Activated CD8-positive, alpha-beta memory T cell treated with anti-CD3 and anti-CD28 coated beads, Interleukin-2, amount 10 ng/mL, durations not matched to agents 7 days and 5 days (primary cell): ENCODE measurements at regions of chr20 and their contacts with region 1.

Region 1: GRCh38 chr20:51385646-51386530 is 156.6 kb downstream of the NFATC2 start:
- DNase-seq: peak; percentile 61
- ATAC-seq: peak; percentile 46
- H3K4me3 Mint-ChIP-seq: peak overlapping the region; percentile 36
- H3K27ac Mint-ChIP-seq: peak overlapping the region; percentile 86
- H3K4me1 Mint-ChIP-seq: peaks cover 76% of the 10 kb centered on the region
- H3K27me3 Mint-ChIP-seq: no peaks in the 10 kb centered on the region

Region 2: DNA sequence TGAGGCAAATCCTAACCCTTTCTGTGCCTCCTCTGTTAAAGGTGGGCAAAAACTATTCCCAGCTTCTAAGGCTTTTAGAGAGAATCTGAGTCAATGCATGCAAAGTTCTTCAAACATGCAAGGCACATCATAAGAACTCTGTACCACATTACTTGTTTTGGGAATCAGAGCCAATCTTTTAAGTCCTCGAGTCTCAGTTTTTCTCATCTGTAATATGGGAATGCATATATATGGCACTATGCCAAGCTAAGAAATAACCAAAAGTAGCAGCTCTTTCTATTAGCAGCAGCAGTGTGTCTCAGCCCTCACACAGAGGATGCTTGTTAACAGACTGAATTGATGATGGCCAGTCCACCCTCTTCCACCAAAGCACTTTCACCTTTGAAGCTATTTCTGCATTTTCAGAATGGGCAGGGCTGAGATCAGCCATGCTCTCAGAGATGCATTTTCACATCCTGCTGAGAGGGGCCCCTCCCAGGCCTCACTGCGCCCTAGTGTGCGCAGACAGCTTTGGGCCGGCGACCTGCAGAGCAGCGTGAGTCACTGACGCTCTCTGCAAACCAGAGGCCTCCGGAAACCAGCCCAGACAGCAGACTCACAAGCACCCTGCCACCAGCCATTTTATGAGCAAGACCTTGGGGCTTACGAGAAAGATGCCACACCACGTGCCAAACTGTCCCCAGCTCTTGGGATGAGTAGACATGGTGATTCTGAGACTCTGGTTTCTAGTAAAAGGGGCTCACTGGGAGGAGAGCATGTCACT is 18.6 kb after region 1 on chr20:
- CTCF ChIA-PET with region 1: interaction called, 71 read pairs
- DNase-seq: peak; percentile 98
- ATAC-seq: peak; percentile 85
- H3K4me3 Mint-ChIP-seq: no peak overlapping the region
- H3K27ac Mint-ChIP-seq: peak overlapping the region; percentile 99
- H3K4me1 Mint-ChIP-seq: peaks cover 95% of the 10 kb centered on the region
- H3K27me3 Mint-ChIP-seq: no peaks in the 10 kb centered on the region

Region 3: GRCh38 chr20:51417250-51418136 is 31.6 kb after region 1 on chr20:
- CTCF ChIA-PET with region 1: interaction called, 22 read pairs
- DNase-seq: no peak
- ATAC-seq: no peak
- H3K4me3 Mint-ChIP-seq: peak overlapping the region; percentile 11
- H3K27ac Mint-ChIP-seq: peak overlapping the region; percentile 88
- H3K4me1 Mint-ChIP-seq: peaks cover 86% of the 10 kb centered on the region
- H3K27me3 Mint-ChIP-seq: no peaks in the 10 kb centered on the region

Region 4: GRCh38 chr20:51494241-51495120 is 108.6 kb after region 1 on chr20:
- CTCF ChIA-PET with region 1: interaction called, 13 read pairs
- DNase-seq: peak; percentile 61
- ATAC-seq: peak; percentile 40
- H3K4me3 Mint-ChIP-seq: peak overlapping the region; percentile 45
- H3K27ac Mint-ChIP-seq: peak overlapping the region; percentile 68
- H3K4me1 Mint-ChIP-seq: peaks cover 92% of the 10 kb centered on the region
- H3K27me3 Mint-ChIP-seq: no peaks in the 10 kb centered on the region

Region 5: DNA sequence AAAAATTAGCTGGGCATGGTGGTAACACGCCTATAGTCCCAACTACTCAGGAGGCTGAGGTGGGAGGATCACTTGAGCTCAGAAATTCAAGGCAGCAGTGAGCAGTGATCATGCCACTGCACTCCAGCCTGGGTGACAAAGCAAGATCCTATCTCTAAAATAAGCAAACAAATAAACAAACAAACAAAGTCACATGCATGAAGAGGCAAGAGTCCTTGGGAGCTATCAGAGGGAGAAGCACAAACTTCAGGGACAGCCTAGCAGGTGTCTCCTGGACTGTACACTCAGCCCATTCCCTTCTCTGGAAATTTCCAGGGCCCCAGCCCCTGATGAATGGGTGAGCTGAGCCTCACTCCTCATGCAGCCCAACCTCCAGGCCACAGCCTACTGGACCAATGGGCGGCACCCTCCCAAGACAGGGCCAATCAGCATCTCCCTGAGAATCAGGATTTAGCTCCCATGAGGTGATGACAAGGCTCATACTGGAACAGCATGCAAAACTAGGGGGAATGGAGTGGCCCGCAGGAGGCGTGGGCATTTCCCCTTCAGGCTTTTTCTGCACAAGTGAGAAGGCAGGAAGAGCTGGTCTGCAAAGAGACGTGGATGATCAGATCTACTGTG is 127.5 kb after region 1 on chr20:
- CTCF ChIA-PET with region 1: interaction called, 10 read pairs
- DNase-seq: no peak
- ATAC-seq: peak; percentile 29
- H3K4me3 Mint-ChIP-seq: no peak overlapping the region
- H3K27ac Mint-ChIP-seq: peak overlapping the region; percentile 70
- H3K4me1 Mint-ChIP-seq: peaks cover 68% of the 10 kb centered on the region
- H3K27me3 Mint-ChIP-seq: no peaks in the 10 kb centered on the region

Region 6: GRCh38 chr20:51595058-51595532 is 209.2 kb after region 1 on chr20:
- CTCF ChIA-PET with region 1: interaction called, 65 read pairs
- DNase-seq: peak; percentile 91
- ATAC-seq: peak; percentile 99
- H3K4me3 Mint-ChIP-seq: no peak overlapping the region
- H3K27ac Mint-ChIP-seq: peak overlapping the region; percentile 75
- H3K4me1 Mint-ChIP-seq: peaks cover 30% of the 10 kb centered on the region
- H3K27me3 Mint-ChIP-seq: peaks cover 17% of the 10 kb centered on the region